ENCODE measurements at regions of chr13 and their contacts with region 1.

Region 1: GRCh38 chr13:24693862-24694471 is 13.8 kb downstream of the ATP12A start:
- DNase-seq: peak; percentile 64
- ATAC-seq: peak; percentile 80
- H3K4me3 Mint-ChIP-seq: no peak overlapping the region
- H3K27ac Mint-ChIP-seq: no peak overlapping the region
- H3K4me1 Mint-ChIP-seq: peaks cover 6% of the 10 kb centered on the region
- H3K27me3 Mint-ChIP-seq: peaks cover 39% of the 10 kb centered on the region
- CTCF ChIP-seq: peak; percentile 82

Region 2: GRCh38 chr13:24574847-24575246 is 119.1 kb before region 1 on chr13:
- CTCF ChIA-PET with region 1: interaction called, 12 read pairs
- POLR2A ChIA-PET with region 1: no interaction called
- intact Hi-C with region 1: no loop called
- DNase-seq: no peak
- ATAC-seq: peak; percentile 45
- H3K4me3 Mint-ChIP-seq: no peak overlapping the region
- H3K27ac Mint-ChIP-seq: no peak overlapping the region
- H3K4me1 Mint-ChIP-seq: peaks cover 11% of the 10 kb centered on the region
- H3K27me3 Mint-ChIP-seq: peaks cover 6% of the 10 kb centered on the region
- CTCF ChIP-seq: no peak

Region 3: DNA sequence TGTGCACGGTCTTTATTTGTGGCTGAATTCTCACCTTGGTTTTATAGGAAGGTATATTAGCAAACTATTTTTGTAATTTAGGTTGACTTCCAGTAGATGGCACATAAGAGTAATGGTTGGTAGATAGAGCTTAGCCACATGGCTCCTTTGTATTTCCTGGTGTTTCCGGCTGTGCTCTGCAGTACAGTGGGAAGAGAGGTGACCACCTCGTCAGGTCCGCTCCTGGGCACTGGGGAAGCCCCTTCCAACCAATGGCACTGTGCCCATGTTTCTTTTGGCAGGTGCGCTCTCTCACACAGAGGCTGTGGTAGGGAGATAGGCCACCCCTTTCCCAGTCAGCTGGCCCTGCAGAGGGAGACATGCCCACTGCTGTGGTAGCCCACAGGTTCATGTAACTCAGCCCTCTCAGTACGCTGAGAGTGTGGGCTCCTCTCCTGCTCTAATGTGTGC is 88.0 kb before region 1 on chr13:
- CTCF ChIA-PET with region 1: interaction called, 17 read pairs
- POLR2A ChIA-PET with region 1: no interaction called
- intact Hi-C with region 1: no loop called
- DNase-seq: no peak
- ATAC-seq: peak; percentile 76
- H3K4me3 Mint-ChIP-seq: no peak overlapping the region
- H3K27ac Mint-ChIP-seq: peak overlapping the region; percentile 41
- H3K4me1 Mint-ChIP-seq: peaks cover 32% of the 10 kb centered on the region
- H3K27me3 Mint-ChIP-seq: no peaks in the 10 kb centered on the region
- CTCF ChIP-seq: peak; percentile 45

Region 4: DNA sequence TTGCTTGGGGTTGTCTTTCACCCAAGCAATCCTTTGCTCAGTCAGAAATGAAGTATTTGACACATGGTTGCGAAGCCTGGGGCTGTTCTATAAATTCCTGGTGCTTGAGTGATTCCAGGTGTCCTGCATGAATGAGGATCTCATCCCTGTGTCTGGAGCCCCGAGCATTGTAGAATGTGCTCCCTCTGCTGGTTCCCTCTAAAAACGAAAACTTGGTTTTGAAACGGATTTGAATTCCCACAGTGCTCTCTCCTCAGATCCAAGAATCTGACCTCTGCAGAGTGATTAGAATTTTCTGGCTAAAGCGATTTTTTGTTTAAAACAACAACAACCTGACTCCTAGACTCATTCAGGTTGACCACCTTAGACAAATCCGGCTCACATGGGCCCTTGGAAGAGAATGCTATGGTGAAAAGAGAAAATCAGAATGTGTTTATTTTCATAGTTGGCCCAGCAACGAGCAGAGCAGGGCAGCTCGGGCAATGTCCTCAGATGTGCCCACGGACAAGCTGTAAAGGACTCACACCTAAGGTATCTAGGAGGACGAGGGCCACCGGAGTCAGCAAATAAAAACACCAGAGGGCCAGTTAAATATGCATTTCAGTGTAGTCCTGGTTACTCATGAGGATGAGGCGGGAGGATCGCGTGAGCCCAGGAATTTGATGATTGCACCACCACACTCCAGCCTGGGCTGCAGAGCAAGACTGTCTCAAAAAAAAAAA is 22.4 kb before region 1 on chr13:
- CTCF ChIA-PET with region 1: interaction called, 57 read pairs
- POLR2A ChIA-PET with region 1: no interaction called
- intact Hi-C with region 1: no loop called
- DNase-seq: no peak
- ATAC-seq: peak; percentile 34
- H3K4me3 Mint-ChIP-seq: no peak overlapping the region
- H3K27ac Mint-ChIP-seq: no peak overlapping the region
- H3K4me1 Mint-ChIP-seq: peaks cover 14% of the 10 kb centered on the region
- H3K27me3 Mint-ChIP-seq: peaks cover 17% of the 10 kb centered on the region
- CTCF ChIP-seq: peak; percentile 86

Region 5: GRCh38 chr13:24709186-24709913 is 15.4 kb after region 1 on chr13:
- CTCF ChIA-PET with region 1: interaction called, 69 read pairs
- POLR2A ChIA-PET with region 1: interaction called, 5 read pairs
- intact Hi-C with region 1: no loop called
- DNase-seq: peak; percentile 86
- ATAC-seq: peak; percentile 96
- H3K4me3 Mint-ChIP-seq: peak overlapping the region; percentile 40
- H3K27ac Mint-ChIP-seq: peak overlapping the region; percentile 73
- H3K4me1 Mint-ChIP-seq: peaks cover 18% of the 10 kb centered on the region
- H3K27me3 Mint-ChIP-seq: no peaks in the 10 kb centered on the region
- CTCF ChIP-seq: peak; percentile 10

Region 6: DNA sequence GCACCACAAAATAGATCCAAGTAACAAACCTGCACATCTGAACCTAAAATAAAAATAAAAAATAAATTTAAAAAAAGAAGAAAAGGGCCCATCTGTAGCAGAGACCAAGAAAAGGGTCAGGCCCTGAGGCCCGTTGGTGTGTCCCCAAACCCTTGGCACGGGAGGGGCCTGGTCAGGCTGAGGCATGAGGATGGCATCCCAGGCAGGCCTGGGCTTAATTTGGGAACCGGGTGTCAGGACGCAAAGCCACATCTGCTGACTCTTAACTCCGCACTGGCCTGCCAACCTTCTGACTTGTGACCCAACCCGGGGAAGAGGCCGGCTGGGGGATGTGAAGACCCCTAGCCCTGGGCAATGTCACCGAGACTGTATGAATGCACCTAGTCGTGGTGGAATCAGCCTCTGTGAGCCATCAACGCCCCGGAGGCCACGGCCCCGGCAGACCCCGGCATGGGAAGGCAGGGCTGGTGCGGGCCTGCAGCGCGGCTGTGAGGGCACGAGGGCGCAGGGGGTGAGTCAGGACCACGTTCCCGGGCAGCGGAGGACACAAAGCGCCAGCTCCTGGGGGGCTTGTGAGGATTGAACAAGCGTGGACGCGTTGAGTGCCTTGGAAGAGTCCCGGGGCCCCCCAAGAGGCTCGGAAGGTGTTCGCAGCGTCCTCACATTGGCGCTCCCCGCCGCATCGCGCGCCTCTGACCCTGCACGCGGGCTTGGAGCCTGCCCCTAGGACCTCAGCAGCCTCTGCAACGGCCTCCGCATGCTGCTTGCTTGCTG is 24.4 kb after region 1 on chr13:
- CTCF ChIA-PET with region 1: interaction called, 99 read pairs
- POLR2A ChIA-PET with region 1: interaction called, 5 read pairs
- intact Hi-C with region 1: no loop called
- DNase-seq: no peak
- ATAC-seq: no peak
- H3K4me3 Mint-ChIP-seq: no peak overlapping the region
- H3K27ac Mint-ChIP-seq: no peak overlapping the region
- H3K4me1 Mint-ChIP-seq: no peaks in the 10 kb centered on the region
- H3K27me3 Mint-ChIP-seq: peaks cover 3% of the 10 kb centered on the region
- CTCF ChIP-seq: no peak

Region 7: DNA sequence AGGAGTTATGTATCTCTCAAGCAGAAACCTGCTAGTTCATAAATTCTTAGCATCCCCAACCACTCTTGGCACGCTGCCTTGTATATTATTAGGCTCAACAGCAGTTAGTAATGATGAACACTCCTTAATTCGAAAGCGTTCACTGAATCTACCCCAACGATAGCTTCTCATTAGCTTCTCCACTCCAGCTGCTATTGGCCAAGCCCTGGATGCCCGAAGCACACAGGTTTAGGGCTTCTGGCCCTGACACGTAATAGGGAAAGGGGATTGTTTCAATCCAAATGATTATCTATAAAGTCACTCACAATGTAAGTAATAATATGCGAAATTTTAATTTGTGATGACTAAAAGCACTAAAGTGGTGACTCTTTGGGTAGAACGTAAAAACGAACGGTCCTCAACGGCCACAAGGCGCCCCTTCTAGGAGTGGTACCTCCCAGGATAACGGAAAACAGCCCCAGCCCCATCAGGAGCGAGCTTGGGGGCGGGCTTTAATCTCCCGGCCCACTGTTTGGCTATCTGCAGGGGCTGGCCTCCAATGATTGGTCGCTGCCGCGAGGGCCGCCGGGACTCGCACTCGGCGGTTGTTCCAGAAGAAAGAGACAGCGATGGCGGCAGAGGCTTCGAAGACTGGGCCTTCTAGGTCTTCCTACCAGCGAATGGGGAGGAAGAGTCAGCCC is 69.8 kb after region 1 on chr13 and contains the start of gene RNF17:
- CTCF ChIA-PET with region 1: no interaction called
- POLR2A ChIA-PET with region 1: no interaction called
- intact Hi-C with region 1: no loop called
- DNase-seq: no peak
- ATAC-seq: no peak
- H3K4me3 Mint-ChIP-seq: no peak within 1 kb of the TSS
- H3K27ac Mint-ChIP-seq: no peak within 1 kb of the TSS
- H3K4me1 Mint-ChIP-seq: no peaks in the 10 kb centered on the region
- H3K27me3 Mint-ChIP-seq: peaks cover 8% of the 10 kb centered on the region
- CTCF ChIP-seq: no peak
- total RNA-seq, gene RNF17: not detected

Measured in activated CD8-positive, alpha-beta T cell treated with anti-CD3 and anti-CD28 coated beads for 36 hours (primary cell).